ENCODE measurements at regions of chr3 and their contacts with region 1.

Region 1: GRCh38 chr3:111723293-111724215 is 128.4 kb upstream of the ZBED2 start:
- DNase-seq: no peak
- H3K4me3 ChIP-seq: no peak overlapping the region
- H3K27ac ChIP-seq: no peak overlapping the region
- H3K4me1 ChIP-seq: no peaks in the 10 kb centered on the region
- H3K27me3 ChIP-seq: no peaks in the 10 kb centered on the region
- CTCF ChIP-seq: no peak
- POLR2A ChIP-seq: no peak

Region 2: GRCh38 chr3:111787556-111788463 is 64.3 kb after region 1 on chr3:
- intact Hi-C with region 1: no loop called
- DNase-seq: peak; percentile 53
- H3K4me3 ChIP-seq: no peak overlapping the region
- H3K27ac ChIP-seq: peak overlapping the region in 1 of 2 donors; percentile 66
- H3K4me1 ChIP-seq: no peaks in the 10 kb centered on the region
- H3K27me3 ChIP-seq: no peaks in the 10 kb centered on the region
- CTCF ChIP-seq: no peak
- POLR2A ChIP-seq: no peak

Region 3: DNA sequence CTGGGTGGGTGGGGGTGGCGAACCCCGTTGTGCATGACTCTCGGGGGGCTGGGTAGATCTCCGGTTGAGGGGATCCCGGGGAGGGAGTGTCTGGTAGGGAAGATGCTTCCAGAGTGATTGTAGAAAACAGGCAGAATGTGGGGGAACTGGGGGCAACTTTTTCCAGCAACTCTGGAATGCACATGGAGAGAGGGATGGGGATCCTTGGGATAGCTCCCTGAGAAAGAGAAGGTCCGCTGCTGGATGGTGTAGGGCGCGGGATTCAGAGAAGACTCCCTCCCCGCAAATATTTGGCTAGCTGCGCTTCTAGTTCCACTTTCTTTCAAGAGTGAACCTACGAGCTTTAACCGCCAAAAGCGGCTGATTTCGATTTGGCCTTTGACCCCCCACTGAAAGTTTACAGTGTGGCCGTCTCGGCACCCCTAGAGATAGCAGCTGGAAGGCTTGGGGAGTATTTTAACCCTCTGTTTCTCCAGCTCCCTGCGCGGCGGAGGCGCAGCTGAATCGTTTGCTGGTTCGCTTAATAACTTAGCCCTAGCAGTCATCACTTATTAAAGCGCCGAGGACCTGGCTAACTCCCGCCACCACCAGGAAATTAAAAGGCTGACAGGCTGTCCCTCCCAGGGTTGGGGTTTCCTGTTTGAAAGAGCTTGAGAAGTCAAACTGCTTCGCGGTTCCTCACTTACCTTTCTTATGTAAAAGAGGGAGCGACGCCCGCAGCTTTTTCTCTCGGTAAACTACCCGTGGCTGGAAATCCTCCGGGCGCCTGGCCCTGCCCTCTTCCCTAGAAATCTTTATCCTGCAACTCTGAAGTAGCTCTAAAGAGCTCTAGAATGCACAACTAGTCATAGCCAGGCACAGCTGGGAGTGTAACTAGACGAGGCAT is 136.7 kb after region 1 on chr3:
- intact Hi-C with region 1: loop called (anchors 10 kb)
- DNase-seq: peak; percentile 83
- H3K4me3 ChIP-seq: peak overlapping the region; percentile 78 to 82
- H3K27ac ChIP-seq: peak overlapping the region; percentile 94
- H3K4me1 ChIP-seq: peaks cover 9% of the 10 kb centered on the region
- H3K27me3 ChIP-seq: no peaks in the 10 kb centered on the region
- CTCF ChIP-seq: peak; percentile 12 to 48 (median 43)
- POLR2A ChIP-seq: no peak

Region 4: DNA sequence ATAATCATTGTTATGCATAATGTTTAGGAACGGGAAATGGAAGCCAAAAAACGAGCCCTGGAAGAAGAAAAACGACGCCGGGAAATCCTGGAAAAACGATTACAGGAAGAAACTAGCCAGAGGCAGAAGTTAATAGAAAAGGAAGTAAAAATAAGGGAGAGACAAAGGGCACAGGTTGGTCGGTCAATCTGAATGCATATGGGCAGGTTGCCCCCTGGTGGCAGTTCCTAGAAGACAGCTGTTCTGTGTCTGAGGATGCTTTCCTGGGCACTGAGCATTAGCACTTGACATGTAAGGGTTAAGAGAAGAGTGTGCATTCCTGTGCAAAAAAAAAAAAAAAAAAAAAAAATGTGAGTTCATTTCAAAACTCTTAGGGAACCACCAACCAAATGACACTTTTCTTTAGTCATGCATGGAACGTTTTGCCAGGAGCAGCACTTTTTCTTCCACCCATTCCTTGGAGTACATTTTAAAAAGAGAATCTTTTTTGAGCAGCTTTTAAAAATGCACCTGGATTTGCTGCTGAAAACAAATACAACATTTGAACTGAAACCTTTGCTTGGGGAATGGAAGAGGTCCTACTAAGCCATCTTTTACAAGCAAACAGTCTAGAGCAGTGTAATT is 244.2 kb after region 1 on chr3:
- intact Hi-C with region 1: loop called (anchors 5 kb)
- DNase-seq: peak; percentile 94
- H3K4me3 ChIP-seq: no peak overlapping the region
- H3K27ac ChIP-seq: peak overlapping the region in 1 of 2 donors; percentile 25
- H3K4me1 ChIP-seq: peaks cover 21% of the 10 kb centered on the region
- H3K27me3 ChIP-seq: no peaks in the 10 kb centered on the region
- CTCF ChIP-seq: peak; percentile 78 to 88 (median 84)
- POLR2A ChIP-seq: no peak

Region 5: GRCh38 chr3:111989061-111989678 is 265.6 kb after region 1 on chr3:
- intact Hi-C with region 1: no loop called
- DNase-seq: no peak
- H3K4me3 ChIP-seq: no peak overlapping the region
- H3K27ac ChIP-seq: no peak overlapping the region
- H3K4me1 ChIP-seq: no peaks in the 10 kb centered on the region
- H3K27me3 ChIP-seq: no peaks in the 10 kb centered on the region
- CTCF ChIP-seq: peak in 2 of 3 experiments; percentile 46 to 61
- POLR2A ChIP-seq: no peak

Measured in testis (tissue), 5 donors.